ENCODE measurements at regions of chr11 and their contacts with region 1.

Region 1: DNA sequence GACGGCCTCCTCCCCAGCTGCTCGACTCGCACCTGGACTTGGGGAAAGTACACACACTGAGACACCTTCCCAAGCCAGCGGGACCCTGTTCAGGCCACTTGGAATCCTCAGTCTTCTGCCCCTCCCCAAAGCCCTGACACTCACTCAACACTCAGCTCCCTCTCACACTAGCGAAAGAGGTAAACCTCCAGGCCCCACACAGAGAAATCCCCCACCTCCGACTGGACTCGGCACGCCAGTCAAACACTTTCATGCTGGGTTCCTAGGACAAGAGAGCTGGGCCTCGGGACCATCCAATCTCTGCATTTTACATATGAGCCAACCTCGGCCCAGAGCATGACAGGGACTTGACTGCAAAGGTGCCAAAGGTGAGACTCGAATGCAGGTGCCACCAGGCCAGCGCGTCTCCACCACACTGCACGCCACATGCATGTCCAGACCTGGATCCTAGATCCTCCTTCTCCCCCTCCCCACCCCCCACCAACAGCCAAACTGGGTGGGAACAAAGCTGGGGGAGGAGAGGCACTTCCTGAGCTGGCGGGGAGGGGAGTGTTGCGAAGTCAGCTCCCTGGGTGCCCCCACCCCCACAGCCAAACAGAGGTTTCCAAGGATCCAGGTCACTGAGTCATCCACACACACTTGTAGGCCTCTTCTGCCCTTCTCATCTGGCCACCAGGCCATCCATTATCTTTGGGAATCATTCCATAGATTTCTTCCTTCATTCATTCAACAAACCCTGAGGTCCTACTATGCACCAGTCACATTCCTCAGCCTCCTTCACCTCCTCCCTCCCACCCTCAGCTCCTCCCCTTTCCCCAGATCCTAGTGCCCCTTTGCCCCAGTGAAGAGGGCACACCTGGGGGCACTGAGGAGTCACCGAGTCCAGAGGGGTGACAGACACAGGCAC is 10.7 kb upstream of the CD5 start:
- DNase-seq: no peak
- ATAC-seq: peak; percentile 14 to 26
- H3K4me3 Mint-ChIP-seq: peak overlapping the region; percentile 19 to 79 (median 58)
- H3K27ac Mint-ChIP-seq: peak overlapping the region; percentile 68 to 90 (median 82)
- H3K4me1 Mint-ChIP-seq: peaks cover 34 to 55% (median 47%) of the 10 kb centered on the region in 4 donors
- H3K27me3 Mint-ChIP-seq: no peaks in the 10 kb centered on the region

Region 2: GRCh38 chr11:61071208-61071681 is 20.4 kb before region 1 on chr11:
- POLR2A ChIA-PET with region 1: interaction called, 14 read pairs
- DNase-seq: peak in 8 of 10 donors; percentile 45 to 81 (median 69)
- ATAC-seq: peak; percentile 97 to 99
- H3K4me3 Mint-ChIP-seq: peak overlapping the region; percentile 64 to 87 (median 78)
- H3K27ac Mint-ChIP-seq: peak overlapping the region; percentile 90 to 98 (median 96)
- H3K4me1 Mint-ChIP-seq: peaks cover 38 to 88% (median 85%) of the 10 kb centered on the region in 4 donors
- H3K27me3 Mint-ChIP-seq: no peaks in the 10 kb centered on the region

Region 3: DNA sequence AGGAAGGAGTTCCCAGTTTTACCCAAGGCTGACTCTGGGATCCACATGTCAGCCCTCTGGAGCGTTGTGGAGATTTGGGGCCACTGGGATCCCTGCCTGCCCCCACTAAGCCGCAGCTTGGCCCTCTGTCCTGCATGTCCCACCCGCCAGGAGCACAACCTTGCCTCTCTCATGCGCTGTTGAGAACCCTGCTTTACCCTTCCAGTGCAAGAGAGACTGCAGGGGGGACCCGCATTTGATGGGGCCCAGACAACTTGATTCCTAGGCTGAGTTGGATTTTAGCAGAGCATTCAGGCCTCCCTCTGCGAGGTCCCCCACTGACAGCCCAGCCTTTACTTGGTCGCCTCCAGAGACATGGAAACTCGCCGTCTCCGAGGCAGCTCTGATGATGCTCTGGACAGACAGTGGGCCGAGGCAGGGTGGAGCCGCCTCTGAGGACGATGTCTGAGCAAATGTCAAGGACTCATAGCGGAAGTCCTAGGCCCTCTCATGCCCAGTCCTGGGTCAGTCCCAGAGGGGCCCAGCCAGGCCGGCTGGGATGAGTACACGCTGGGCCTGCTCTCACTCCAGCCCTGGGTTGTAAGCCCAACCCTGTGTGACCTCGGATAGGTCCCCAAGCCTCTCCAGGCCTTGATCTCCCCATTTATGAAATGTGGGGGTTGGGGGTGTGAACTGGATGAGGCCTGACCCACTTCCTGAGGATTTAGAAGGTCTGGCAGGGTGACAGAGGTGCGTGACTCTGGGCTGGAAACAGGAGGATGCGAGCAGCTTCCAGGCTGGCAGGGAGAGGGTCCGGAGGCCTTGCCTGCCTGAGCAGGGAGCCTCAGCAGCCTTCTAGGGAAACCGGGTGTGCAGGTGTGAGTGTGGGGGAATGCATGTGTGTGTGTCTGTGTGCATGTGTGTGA is 11.3 kb after region 1 on chr11:
- POLR2A ChIA-PET with region 1: interaction called, 24 read pairs
- DNase-seq: peak in 2 of 10 donors; percentile 42 to 53
- ATAC-seq: peak; percentile 35 to 45
- H3K4me3 Mint-ChIP-seq: no peak overlapping the region
- H3K27ac Mint-ChIP-seq: peak overlapping the region in 1 of 10 donors; percentile 100
- H3K4me1 Mint-ChIP-seq: peaks cover 24 to 46% (median 42%) of the 10 kb centered on the region in 4 donors
- H3K27me3 Mint-ChIP-seq: no peaks in the 10 kb centered on the region

Region 4: GRCh38 chr11:61152816-61153592 is 61.4 kb after region 1 on chr11:
- POLR2A ChIA-PET with region 1: no interaction called
- DNase-seq: no peak
- ATAC-seq: no peak
- H3K4me3 Mint-ChIP-seq: no peak overlapping the region
- H3K27ac Mint-ChIP-seq: no peak overlapping the region
- H3K4me1 Mint-ChIP-seq: peaks cover 14 to 27% (median 22%) of the 10 kb centered on the region in 4 donors
- H3K27me3 Mint-ChIP-seq: no peaks in the 10 kb centered on the region